ENCODE measurements at regions of chr4 and their contacts with region 1.

Region 1: DNA sequence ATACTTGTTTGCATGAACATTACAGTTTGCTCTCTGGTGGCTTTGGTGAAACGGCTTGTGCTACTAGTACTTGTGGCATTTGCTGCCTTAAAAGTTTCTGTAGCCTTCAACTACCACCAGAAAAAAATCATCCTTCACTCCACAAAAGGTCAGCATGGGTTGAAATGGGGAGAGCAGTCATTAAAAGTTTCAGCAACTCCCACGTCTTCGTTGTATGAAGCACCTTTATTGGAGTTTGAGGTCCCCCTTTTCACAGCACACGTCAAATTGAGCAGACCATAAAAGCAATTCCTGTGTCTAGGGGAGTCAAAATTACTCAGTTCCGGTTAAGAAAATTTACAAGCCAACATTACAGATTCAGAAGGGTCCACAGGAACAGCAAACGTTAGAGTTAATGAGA is 23.0 kb upstream of the CCNA2 start:
- DNase-seq: no peak
- H3K4me3 Mint-ChIP-seq: no peak overlapping the region
- H3K27ac Mint-ChIP-seq: no peak overlapping the region
- H3K4me1 Mint-ChIP-seq: no peaks in the 10 kb centered on the region
- H3K27me3 Mint-ChIP-seq: no peaks in the 10 kb centered on the region
- CTCF ChIP-seq: no peak

Region 2: GRCh38 chr4:121824950-121825349 is 21.7 kb before region 1 on chr4:
- CTCF ChIA-PET with region 1: no interaction called
- intact Hi-C with region 1: loop called (anchors 1 kb)
- DNase-seq: no peak
- H3K4me3 Mint-ChIP-seq: no peak overlapping the region
- H3K27ac Mint-ChIP-seq: no peak overlapping the region
- H3K4me1 Mint-ChIP-seq: no peaks in the 10 kb centered on the region
- H3K27me3 Mint-ChIP-seq: no peaks in the 10 kb centered on the region
- CTCF ChIP-seq: no peak

Region 3: GRCh38 chr4:121877041-121877777 is 30.5 kb after region 1 on chr4:
- CTCF ChIA-PET with region 1: no interaction called
- intact Hi-C with region 1: no loop called
- DNase-seq: no peak
- H3K4me3 Mint-ChIP-seq: no peak overlapping the region
- H3K27ac Mint-ChIP-seq: no peak overlapping the region
- H3K4me1 Mint-ChIP-seq: no peaks in the 10 kb centered on the region
- H3K27me3 Mint-ChIP-seq: no peaks in the 10 kb centered on the region
- CTCF ChIP-seq: no peak